ENCODE measurements at regions of chr7 and their contacts with region 1.

Region 1: GRCh38 chr7:99040104-99040958 is 103.6 kb downstream of the SMURF1 start:
- DNase-seq: peak; percentile 76
- H3K4me3 Mint-ChIP-seq: no peak overlapping the region
- H3K27ac Mint-ChIP-seq: peak overlapping the region; percentile 80
- H3K4me1 Mint-ChIP-seq: no peaks in the 10 kb centered on the region
- H3K27me3 Mint-ChIP-seq: no peaks in the 10 kb centered on the region

Region 2: DNA sequence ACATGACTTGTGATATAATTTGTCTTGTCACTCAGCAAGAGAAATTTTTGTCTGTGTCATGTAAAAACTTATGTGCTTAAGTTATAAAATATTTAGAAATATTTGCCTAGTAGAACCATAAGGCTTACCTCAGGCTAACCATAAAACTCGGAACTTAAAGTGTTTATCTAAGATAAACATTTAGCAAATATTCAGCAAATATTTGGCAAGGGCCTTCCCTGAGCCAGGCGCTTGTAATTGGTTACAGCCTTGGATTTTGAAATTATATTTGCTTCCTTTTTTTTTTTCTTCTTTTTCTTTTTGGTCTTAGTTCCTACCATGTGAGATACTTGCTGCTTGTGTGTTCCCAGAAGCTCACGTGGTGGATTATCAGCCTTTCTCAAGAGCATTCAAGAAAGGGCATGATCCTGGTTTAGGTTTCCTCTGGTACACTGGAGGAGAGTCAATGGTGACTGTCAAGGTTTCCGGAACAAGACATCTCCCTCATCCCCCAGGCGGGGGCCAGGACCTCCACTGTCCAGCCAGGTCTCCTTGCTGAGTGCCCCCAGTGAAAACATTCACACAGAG is 764.1 kb before region 1 on chr7:
- CTCF ChIA-PET with region 1: no interaction called
- intact Hi-C with region 1: no loop called
- DNase-seq: no peak
- H3K4me3 Mint-ChIP-seq: no peak overlapping the region
- H3K27ac Mint-ChIP-seq: no peak overlapping the region
- H3K4me1 Mint-ChIP-seq: peaks cover 4% of the 10 kb centered on the region
- H3K27me3 Mint-ChIP-seq: no peaks in the 10 kb centered on the region

Region 3: DNA sequence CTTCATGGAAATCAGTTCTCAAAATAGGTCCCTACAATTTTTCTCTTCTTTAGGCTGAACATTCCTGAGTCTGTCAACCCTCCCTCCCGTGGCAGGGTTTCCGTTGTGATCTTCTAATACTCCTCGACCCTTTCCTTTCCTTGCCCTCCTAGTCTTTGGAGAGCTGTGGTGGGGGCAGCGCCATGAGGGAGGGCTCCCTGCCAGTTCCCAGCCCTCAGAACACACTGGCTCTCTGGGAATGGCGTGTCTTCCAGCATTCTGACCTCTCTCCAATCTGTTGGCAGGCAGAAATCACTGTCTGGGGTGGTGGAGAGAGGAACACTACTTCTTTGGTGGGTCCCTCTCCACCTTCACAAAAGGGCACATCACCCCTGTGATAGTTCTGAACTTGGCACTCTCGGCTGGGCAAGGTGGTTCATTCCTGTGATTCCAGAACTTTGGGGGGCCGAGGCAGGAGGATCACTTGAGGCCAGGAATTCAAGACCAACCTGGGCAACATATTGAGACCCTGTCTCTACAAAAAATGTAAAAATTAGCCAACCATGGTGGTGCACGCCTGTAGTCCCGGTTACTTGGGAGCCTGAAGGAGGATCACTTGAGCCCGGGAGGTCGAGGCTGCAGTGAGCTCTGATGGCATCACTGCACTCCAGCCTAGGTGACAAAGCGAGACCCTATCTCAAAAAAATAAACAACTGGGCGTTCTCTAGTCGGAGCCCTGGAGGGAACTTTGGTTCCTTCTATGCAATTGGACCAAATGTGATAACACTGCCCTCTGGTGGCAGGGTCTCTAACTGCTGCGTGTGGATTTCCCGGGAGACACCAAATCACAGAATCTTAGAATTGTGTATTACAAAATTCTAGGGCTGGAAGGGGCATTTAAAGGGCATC is 272.2 kb after region 1 on chr7:
- CTCF ChIA-PET with region 1: interaction called, 26 read pairs
- intact Hi-C with region 1: loop called (anchors 1 kb)
- DNase-seq: peak; percentile 86
- H3K4me3 Mint-ChIP-seq: no peak overlapping the region
- H3K27ac Mint-ChIP-seq: no peak overlapping the region
- H3K4me1 Mint-ChIP-seq: peaks cover 12% of the 10 kb centered on the region
- H3K27me3 Mint-ChIP-seq: no peaks in the 10 kb centered on the region

Region 4: DNA sequence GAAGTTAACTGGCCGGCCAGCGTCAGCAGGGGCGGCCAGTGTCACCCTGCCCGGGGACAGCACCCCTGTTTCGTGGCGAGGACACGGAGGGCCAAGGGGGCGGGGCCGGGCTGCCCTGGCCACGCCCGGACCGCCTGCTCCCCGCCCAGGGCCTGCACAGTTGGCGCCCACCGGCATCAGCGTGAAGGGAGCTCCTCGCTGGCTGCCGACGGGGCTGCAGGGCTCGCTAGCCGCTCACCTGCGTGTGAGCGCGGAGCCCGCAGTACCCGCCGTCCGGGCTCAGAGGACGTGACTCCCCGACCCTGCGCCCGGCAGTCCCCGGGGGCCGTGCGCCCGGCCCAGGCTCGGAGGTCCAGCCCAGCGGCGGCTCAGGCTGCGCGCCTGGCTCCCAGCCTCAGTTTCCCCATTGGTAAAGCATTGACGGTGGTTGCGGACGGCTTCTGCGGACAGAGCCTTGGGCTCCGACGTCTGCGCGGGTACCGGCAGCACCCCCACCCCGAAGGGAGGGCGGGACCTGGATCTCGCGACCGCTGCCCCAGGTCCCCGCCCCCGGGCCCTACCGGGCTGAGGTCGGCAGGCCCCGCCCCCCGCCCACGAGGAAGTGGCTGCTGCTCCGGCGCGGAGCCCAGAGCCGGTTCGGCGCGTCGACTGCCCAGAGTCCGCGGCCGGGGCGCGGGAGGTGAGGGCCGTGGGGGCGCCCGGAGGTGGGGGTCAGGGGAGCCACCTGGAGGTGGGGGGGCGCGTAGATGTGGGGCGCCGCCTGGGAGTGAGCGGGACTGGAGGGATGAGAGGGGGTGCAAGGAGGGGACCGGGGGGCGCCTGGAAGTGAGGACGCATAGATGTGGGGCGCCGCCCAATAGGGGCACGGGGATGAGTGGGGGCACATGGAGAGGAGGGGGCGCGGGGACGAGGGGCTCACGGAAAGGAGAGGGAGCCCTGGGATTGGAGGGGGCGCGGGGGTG is 334.1 kb after region 1 on chr7 and contains the start of gene ARPC1B:
- CTCF ChIA-PET with region 1: no interaction called
- intact Hi-C with region 1: loop called (anchors 5 kb)
- DNase-seq: peak; percentile 88
- H3K4me3 Mint-ChIP-seq: peak within 1 kb of the TSS; percentile 79
- H3K27ac Mint-ChIP-seq: peak within 1 kb of the TSS; percentile 87
- H3K4me1 Mint-ChIP-seq: peaks cover 24% of the 10 kb centered on the region
- H3K27me3 Mint-ChIP-seq: no peaks in the 10 kb centered on the region
- total RNA-seq, gene ARPC1B: 334 to 345 TPM

Measured in activated naive CD4-positive, alpha-beta T cell treated with anti-CD3 and anti-CD28 coated beads for 36 hours (primary cell).